SK-N-SH (cell line): ENCODE measurements at regions of chr5 and their contacts with region 1.

Region 1: GRCh38 chr5:80083101-80083890 is 48.1 kb downstream of the THBS4 start:
- DNase-seq: peak; percentile 76
- H3K4me3 ChIP-seq: no peak overlapping the region
- H3K27ac ChIP-seq: no peak overlapping the region
- H3K4me1 ChIP-seq: no peaks in the 10 kb centered on the region; a peak in 1 of 4 replicates
- H3K27me3 ChIP-seq: no peaks in the 10 kb centered on the region
- CTCF ChIP-seq: peak; percentile 81
- EP300 ChIP-seq: no peak
- RAD21 ChIP-seq: peak; percentile 85

Region 2: GRCh38 chr5:79774171-79774854 is 309.0 kb before region 1 on chr5:
- CTCF ChIA-PET with region 1: no interaction called
- POLR2A ChIA-PET with region 1: no interaction called
- DNase-seq: peak; percentile 38
- H3K4me3 ChIP-seq: no peak overlapping the region
- H3K27ac ChIP-seq: no peak overlapping the region
- H3K4me1 ChIP-seq: no peaks in the 10 kb centered on the region
- H3K27me3 ChIP-seq: no peaks in the 10 kb centered on the region
- CTCF ChIP-seq: peak; percentile 35
- EP300 ChIP-seq: no peak
- RAD21 ChIP-seq: peak; percentile 35; the same call in 1 of the 2 replicates

Region 3: GRCh38 chr5:79878721-79879336 is 204.5 kb before region 1 on chr5:
- CTCF ChIA-PET with region 1: interaction called, 10 read pairs
- POLR2A ChIA-PET with region 1: no interaction called
- DNase-seq: peak; percentile 32
- H3K4me3 ChIP-seq: no peak overlapping the region
- H3K27ac ChIP-seq: no peak overlapping the region
- H3K4me1 ChIP-seq: peaks cover 0 to 2% of the 10 kb centered on the region in 2 experiments; a peak in 2 of 4 replicates
- H3K27me3 ChIP-seq: no peaks in the 10 kb centered on the region; the same call in 1 of the 2 replicates
- CTCF ChIP-seq: peak; percentile 50
- EP300 ChIP-seq: no peak
- RAD21 ChIP-seq: no peak

Region 4: DNA sequence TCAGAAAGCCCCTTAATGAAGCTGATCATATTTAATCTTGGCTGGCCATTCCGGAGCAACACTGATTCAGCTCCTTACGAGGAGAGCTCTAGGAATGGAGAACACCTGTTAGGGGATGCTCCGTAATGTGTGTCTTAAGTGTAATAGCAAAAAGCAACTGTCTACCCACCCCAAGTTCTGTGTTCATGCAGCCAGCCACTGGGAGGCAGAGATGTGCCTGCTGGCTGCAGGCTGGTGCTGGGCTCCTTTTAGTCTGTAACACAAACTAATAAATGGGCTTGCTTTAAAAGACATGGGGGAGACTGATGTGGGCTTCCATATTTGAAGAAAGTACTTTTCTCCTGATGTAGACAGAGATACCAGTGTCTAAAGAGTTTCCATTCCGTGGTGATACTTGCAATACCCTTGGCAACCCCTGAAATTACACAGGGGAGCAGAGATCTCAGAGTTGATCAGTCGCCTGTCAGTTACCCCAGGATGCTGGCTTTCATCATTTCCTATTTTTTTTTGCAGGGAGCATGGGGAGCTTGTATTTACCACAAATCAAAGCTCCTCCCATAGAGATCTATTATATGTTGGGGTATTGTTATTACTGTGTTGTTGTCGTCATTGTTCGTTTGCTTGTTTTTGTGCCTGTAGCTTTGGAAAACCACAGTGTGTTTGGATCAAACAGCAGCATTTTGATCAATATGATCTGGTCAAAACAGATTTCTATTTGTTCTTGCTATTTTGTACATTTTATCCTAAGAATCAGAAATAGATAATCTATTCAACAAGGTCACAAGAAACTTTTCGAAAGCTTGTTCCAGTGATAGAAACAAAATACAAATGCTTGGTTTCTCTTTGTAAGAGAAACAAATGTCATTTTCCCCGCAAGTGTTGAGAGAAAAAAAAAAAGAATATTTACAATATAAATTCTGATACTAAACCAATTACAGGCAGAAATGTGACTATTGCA is 158.1 kb before region 1 on chr5:
- CTCF ChIA-PET with region 1: interaction called, 14 read pairs
- POLR2A ChIA-PET with region 1: no interaction called
- DNase-seq: no peak
- H3K4me3 ChIP-seq: no peak overlapping the region; a peak in 1 of 4 replicates
- H3K27ac ChIP-seq: no peak overlapping the region
- H3K4me1 ChIP-seq: peaks cover 0 to 2% of the 10 kb centered on the region in 2 experiments; a peak in 2 of 4 replicates
- H3K27me3 ChIP-seq: no peaks in the 10 kb centered on the region; the same call in 1 of the 2 replicates
- CTCF ChIP-seq: peak; percentile 42
- EP300 ChIP-seq: no peak
- RAD21 ChIP-seq: peak; percentile 51

Region 5: DNA sequence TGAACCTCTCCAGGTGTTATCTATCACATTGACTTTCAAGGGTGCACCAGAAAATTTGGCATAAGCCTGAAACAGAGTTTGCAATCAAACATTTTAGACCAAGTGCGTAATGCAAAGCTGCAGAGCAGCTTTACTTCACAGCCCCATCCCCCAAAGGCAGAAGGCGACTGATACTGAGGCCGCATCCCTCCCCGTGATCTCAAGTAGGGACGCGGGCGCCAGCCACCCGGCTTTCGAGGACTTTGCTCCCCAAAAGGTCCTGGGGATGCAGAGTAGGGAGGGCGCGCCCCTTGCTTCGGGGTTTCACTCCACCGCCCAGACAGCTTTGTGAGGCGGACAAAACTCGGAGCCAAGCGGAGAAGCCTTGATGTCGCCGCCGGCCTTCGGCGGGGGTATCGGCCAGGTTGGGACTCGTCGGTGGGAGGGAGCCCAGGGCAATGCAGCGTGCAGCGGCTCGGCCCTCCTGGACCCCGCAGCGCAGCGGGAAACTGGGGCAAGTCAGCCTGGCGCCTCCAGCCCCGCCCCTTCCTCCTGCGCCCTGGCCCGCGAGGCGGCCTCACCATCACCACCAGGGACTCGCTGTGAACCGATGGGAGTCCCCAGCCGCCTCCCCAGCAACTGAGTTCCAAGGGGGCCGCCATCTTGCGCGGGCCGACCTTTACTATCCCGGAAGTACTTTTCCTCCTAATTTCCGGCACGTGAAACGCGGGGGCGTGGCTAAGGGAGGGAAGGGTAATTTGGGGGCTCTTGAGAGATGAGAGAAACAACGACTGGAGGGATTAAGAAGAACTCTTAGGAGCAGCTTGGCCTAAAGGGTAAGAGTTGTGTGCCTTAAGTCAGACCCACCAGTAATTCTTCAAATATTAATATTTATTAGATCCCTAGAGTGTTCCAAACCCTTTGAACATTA is 92.4 kb before region 1 on chr5 and contains the start of gene MTX3:
- CTCF ChIA-PET with region 1: interaction called, 12 read pairs
- POLR2A ChIA-PET with region 1: interaction called, 3 read pairs
- DNase-seq: peak; percentile 89
- H3K4me3 ChIP-seq: peak within 1 kb of the TSS; percentile 83 to 98
- H3K27ac ChIP-seq: peak within 1 kb of the TSS; percentile 71 to 86
- H3K4me1 ChIP-seq: peaks cover 10 to 13% of the 10 kb centered on the region in 2 experiments; a peak in 3 of 4 replicates
- H3K27me3 ChIP-seq: no peaks in the 10 kb centered on the region
- CTCF ChIP-seq: no peak
- EP300 ChIP-seq: no peak
- RAD21 ChIP-seq: no peak
- polyA plus RNA-seq, gene MTX3: 6.8 and 9.8 TPM in 2 replicates

Region 6: GRCh38 chr5:80745490-80745889 is 662.2 kb after region 1 on chr5:
- CTCF ChIA-PET with region 1: no interaction called
- POLR2A ChIA-PET with region 1: no interaction called
- DNase-seq: no peak
- H3K4me3 ChIP-seq: no peak overlapping the region
- H3K27ac ChIP-seq: no peak overlapping the region
- H3K4me1 ChIP-seq: no peaks in the 10 kb centered on the region
- H3K27me3 ChIP-seq: no peaks in the 10 kb centered on the region
- CTCF ChIP-seq: no peak
- EP300 ChIP-seq: no peak
- RAD21 ChIP-seq: no peak